Endothelial cell of umbilical vein (primary cell): ENCODE measurements at regions of chr12 and their contacts with region 1.

Region 1: GRCh38 chr12:54958048-54958658 is 26.4 kb downstream of the TESPA1 start:
- DNase-seq: peak; percentile 70
- H3K4me3 ChIP-seq: no peak overlapping the region
- H3K27ac ChIP-seq: no peak overlapping the region
- H3K4me1 ChIP-seq: no peaks in the 10 kb centered on the region
- H3K27me3 ChIP-seq: peaks cover 6 to 12% of the 10 kb centered on the region in 2 experiments
- CTCF ChIP-seq: peak; percentile 34 to 53
- POLR2A ChIP-seq: no peak

Region 2: GRCh38 chr12:54596526-54596946 is 361.6 kb before region 1 on chr12:
- CTCF ChIA-PET with region 1: no interaction called
- POLR2A ChIA-PET with region 1: no interaction called
- dilution Hi-C with region 1: no loop called
- intact Hi-C with region 1: loop called (anchors 5 kb)
- DNase-seq: peak; percentile 58
- H3K4me3 ChIP-seq: no peak overlapping the region
- H3K27ac ChIP-seq: no peak overlapping the region
- H3K4me1 ChIP-seq: no peaks in the 10 kb centered on the region
- H3K27me3 ChIP-seq: peaks cover 17 to 18% of the 10 kb centered on the region in 2 experiments
- CTCF ChIP-seq: peak; percentile 86 to 89
- POLR2A ChIP-seq: no peak

Region 3: DNA sequence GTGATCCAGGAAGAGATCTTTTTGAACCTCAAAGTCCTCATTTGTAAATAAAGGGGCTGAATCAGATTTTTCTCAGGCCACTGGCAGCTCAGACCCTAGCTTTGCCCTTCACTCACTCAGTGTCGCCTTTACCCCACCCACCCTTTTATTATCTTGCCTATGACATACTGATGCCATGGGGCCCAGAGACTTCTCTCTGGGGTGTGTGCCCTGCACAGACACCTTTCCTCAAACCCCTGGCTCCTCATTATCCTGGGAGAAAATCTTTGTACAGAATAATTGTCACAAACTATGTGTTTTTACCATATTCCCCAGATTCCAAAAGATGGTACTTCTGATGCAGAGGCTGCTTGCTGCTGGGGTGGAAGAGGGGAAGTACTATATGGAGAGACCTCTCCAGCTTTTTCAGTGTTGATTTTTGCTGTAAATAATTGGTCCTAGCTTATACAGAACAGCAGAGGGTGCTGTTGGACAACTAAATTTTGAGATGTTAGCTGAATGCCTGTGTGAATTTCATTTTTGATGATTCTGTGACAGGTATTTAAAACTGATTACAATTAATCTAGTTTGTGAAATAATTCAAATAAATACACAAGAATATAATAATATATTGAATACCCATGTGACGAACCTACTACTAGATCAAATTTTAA is 256.1 kb before region 1 on chr12:
- CTCF ChIA-PET with region 1: interaction called, 25 read pairs
- POLR2A ChIA-PET with region 1: no interaction called
- dilution Hi-C with region 1: no loop called
- intact Hi-C with region 1: loop called (anchors 1 kb)
- DNase-seq: peak; percentile 28
- H3K4me3 ChIP-seq: no peak overlapping the region
- H3K27ac ChIP-seq: no peak overlapping the region
- H3K4me1 ChIP-seq: no peaks in the 10 kb centered on the region
- H3K27me3 ChIP-seq: peaks cover 3 to 7% of the 10 kb centered on the region in 2 experiments
- CTCF ChIP-seq: peak; percentile 41 to 46
- POLR2A ChIP-seq: no peak

Region 4: DNA sequence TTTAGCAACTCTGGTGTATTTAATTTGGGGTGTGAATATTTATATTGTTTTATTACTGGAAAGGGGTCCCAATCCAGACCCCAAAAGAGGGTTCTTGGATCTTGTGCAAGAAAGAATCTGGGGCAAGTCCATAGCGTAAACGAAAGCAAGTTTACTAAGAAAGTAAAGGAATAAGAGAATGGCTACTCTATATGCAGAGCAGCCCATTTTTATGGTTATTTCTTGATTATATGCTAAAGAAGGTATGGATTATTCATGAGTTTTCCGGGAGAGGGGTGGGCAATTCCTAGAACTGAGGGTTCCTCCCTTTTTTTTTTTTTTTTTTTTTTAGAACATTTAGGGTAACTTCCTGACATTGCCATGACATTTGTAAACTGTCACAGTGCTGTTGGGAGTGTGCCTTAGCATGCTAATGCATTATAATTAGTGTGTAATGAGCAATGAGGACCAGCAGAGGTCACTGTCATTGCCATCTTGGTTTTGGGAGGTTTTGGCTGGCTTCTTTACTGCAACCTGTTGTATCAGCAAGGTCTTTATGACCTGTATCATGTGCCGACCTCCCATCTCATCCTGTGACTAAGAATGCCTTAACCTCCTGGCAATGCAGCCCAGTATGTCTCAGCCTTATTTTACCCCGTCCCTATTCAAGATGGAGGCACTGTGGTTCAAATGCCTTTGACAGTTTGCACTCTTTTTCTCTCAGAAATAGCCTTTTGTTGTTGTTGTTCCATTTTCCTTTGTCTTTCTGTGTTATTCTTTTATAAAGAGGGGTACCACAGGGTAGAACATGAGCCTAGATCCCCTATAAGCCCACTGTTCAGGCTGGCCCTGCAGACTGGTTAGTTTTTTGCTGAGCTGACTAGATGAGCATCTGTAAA is 234.5 kb before region 1 on chr12:
- CTCF ChIA-PET with region 1: interaction called, 14 read pairs
- POLR2A ChIA-PET with region 1: no interaction called
- dilution Hi-C with region 1: no loop called
- intact Hi-C with region 1: loop called (anchors 1 kb)
- DNase-seq: peak; percentile 24
- H3K4me3 ChIP-seq: no peak overlapping the region
- H3K27ac ChIP-seq: no peak overlapping the region
- H3K4me1 ChIP-seq: no peaks in the 10 kb centered on the region
- H3K27me3 ChIP-seq: peaks cover 1 to 2% of the 10 kb centered on the region in 2 experiments
- CTCF ChIP-seq: peak; percentile 44 to 62
- POLR2A ChIP-seq: no peak

Region 5: GRCh38 chr12:54749191-54749818 is 208.8 kb before region 1 on chr12:
- CTCF ChIA-PET with region 1: interaction called, 136 read pairs
- POLR2A ChIA-PET with region 1: no interaction called
- dilution Hi-C with region 1: no loop called
- intact Hi-C with region 1: loop called (anchors 1 kb)
- DNase-seq: peak; percentile 41
- H3K4me3 ChIP-seq: no peak overlapping the region
- H3K27ac ChIP-seq: no peak overlapping the region
- H3K4me1 ChIP-seq: no peaks in the 10 kb centered on the region
- H3K27me3 ChIP-seq: peaks cover 0 to 2% of the 10 kb centered on the region in 2 experiments
- CTCF ChIP-seq: peak; percentile 53 to 57
- POLR2A ChIP-seq: no peak

Region 6: DNA sequence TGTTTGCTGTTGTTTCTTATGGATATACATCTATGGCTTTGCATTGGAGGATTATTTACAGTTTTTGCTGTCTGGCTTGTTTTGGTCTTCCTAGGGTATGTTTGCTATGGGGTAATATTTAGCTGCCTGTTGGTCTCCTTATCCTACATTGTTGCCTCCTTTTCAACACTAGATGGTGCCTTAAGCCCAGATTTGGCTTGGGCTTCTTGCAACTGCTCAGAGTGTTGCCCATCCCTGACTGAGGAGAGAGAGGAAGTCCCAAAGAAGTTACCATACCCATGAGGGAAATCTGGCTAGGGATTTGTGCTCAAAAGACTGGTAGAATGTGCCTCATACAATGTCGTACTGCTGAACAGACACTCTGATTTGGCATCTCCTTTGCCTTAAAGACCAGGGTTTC is 198.4 kb before region 1 on chr12:
- CTCF ChIA-PET with region 1: interaction called, 52 read pairs
- POLR2A ChIA-PET with region 1: no interaction called
- dilution Hi-C with region 1: no loop called
- intact Hi-C with region 1: loop called (anchors 1 kb)
- DNase-seq: no peak
- H3K4me3 ChIP-seq: no peak overlapping the region
- H3K27ac ChIP-seq: no peak overlapping the region
- H3K4me1 ChIP-seq: no peaks in the 10 kb centered on the region
- H3K27me3 ChIP-seq: no peaks in the 10 kb centered on the region
- CTCF ChIP-seq: peak in 1 of 2 donors; percentile 6
- POLR2A ChIP-seq: no peak

Region 7: DNA sequence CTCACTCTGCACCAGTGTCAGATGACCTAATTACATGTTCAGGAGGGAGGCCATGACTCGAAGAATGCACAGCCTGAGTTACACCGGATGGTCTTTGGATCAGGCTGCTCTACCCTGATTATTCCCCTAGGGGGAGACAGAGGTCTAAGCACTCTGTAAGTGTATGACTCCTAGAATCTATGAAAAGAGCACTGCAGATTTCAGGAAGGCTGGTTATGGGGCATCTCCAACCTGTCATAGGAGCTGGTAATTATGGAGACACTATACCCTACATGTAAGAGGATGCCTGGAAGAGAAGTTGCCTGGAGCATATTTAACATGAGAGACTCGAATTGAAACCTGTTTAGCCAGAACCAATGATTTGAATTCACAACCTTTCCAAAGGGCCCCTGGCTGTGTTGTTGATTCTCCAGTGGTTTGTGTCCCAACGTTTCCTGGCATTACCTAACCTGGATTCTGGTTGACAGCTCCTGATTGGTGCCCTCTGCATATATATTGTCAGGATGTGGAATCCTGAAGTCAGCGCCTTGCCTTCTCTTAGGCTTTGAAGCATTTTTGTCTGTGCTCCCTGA is 104.1 kb before region 1 on chr12 and contains the start of gene MUCL1:
- CTCF ChIA-PET with region 1: interaction called, 23 read pairs
- POLR2A ChIA-PET with region 1: no interaction called
- dilution Hi-C with region 1: no loop called
- intact Hi-C with region 1: loop called (anchors 1 kb)
- DNase-seq: peak; percentile 69
- H3K4me3 ChIP-seq: no peak within 1 kb of the TSS
- H3K27ac ChIP-seq: no peak within 1 kb of the TSS
- H3K4me1 ChIP-seq: no peaks in the 10 kb centered on the region
- H3K27me3 ChIP-seq: peaks cover 3 to 11% of the 10 kb centered on the region in 2 experiments
- CTCF ChIP-seq: peak; percentile 73 to 81
- POLR2A ChIP-seq: no peak
- total RNA-seq, gene MUCL1: not detected in 2 replicates

Region 8: DNA sequence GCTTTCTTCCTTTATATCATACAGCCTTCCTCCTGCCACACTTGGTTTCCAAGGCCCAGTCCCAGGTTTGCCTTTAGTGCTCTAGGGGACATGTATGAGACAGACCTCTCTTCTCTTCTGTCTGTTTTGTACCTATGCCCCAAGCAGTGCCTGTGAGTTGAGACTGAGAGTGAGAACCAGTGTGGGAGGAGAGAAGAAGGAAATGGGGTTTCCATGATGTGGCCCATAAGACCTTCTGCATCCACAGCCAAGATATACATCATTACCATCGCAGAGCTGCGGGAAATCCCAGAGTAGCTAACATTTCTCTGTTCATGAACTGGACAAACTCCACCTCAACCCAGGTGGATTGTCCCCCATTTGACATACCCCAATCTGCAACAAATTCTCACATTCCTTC is 23.6 kb after region 1 on chr12:
- CTCF ChIA-PET with region 1: no interaction called
- POLR2A ChIA-PET with region 1: no interaction called
- dilution Hi-C with region 1: no loop called
- intact Hi-C with region 1: no loop called
- DNase-seq: no peak
- H3K4me3 ChIP-seq: no peak overlapping the region
- H3K27ac ChIP-seq: no peak overlapping the region
- H3K4me1 ChIP-seq: no peaks in the 10 kb centered on the region
- H3K27me3 ChIP-seq: peaks cover 0 to 5% of the 10 kb centered on the region in 2 experiments
- CTCF ChIP-seq: no peak
- POLR2A ChIP-seq: no peak